Calu3 (cell line): ENCODE measurements at regions of chr2 and their contacts with region 1.

Region 1: DNA sequence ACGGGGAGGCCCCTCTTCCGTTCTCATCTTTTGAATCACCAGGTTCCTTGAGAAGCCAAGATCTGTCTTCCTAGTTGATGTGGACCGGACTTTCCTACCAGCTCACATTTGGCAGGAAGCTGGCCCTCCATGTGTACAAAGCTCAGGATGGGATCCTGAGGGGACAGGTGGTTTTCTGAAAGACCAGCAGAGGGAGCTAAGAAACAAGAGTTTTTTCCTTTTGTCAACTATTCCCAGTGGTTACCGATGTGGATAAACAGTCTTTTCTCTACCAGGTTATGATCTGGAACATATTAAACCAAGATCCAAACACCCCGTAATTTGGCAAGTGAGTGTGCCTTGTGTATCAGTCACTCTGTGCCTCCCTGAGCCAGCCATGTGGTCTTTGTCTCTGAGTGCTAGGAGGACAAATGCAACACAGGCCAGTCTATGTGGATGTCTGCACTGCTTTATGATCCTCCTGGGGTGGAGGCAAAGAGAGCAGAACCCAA is 25.1 kb upstream of the ARHGAP25 start:
- DNase-seq: peak; percentile 17
- H3K4me3 Mint-ChIP-seq: no peak overlapping the region
- H3K27ac Mint-ChIP-seq: no peak overlapping the region
- H3K4me1 Mint-ChIP-seq: peaks cover 5% of the 10 kb centered on the region
- H3K27me3 Mint-ChIP-seq: peaks cover 59% of the 10 kb centered on the region
- CTCF ChIP-seq: peak; percentile 48

Region 2: DNA sequence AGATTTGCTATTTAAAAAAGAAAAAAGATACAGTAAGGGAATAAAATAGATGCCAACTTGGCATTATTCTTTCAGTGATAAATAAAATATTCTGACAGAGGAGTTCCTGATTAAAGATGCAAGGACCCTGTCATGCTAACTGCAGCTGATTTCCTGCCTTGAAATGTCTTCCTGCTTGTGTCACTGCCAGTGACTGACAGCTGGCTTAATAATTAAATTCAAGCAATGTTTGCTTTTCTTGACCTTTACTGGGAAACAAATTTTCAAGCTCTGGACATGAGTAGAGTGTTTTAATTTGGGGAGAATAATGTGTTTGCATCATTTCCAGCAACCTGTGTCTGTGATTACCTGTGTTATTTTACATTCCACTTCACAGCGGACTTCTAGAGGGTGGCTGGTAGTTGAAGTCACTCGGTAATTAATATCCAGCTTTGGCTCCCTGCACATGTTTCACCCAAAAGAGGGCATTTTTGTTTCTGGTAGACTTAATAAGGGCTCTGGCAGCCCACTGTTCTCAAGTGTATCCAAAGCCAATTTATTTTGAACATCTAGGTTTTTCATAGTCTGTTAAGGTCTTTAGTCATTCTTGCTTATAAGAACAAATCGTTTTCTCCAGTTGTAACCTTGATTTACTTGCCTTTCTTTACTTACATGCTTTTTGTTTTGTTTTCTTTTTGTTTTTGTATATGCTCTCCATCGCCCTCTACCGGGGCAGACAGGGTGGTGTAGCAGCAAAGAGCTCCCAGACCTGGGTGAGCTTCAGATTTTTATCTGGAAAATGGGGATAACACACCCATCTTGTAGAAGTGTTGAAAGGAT is 114.6 kb before region 1 on chr2:
- CTCF ChIA-PET with region 1: no interaction called
- intact Hi-C with region 1: no loop called
- DNase-seq: peak; percentile 53
- H3K4me3 Mint-ChIP-seq: no peak overlapping the region
- H3K27ac Mint-ChIP-seq: no peak overlapping the region
- H3K4me1 Mint-ChIP-seq: peaks cover 14% of the 10 kb centered on the region
- H3K27me3 Mint-ChIP-seq: no peaks in the 10 kb centered on the region
- CTCF ChIP-seq: peak; percentile 70

Region 3: GRCh38 chr2:68901199-68901960 is 191.9 kb after region 1 on chr2:
- CTCF ChIA-PET with region 1: interaction called, 5 read pairs
- intact Hi-C with region 1: loop called (anchors 1 kb)
- DNase-seq: peak; percentile 31
- H3K4me3 Mint-ChIP-seq: no peak overlapping the region
- H3K27ac Mint-ChIP-seq: no peak overlapping the region
- H3K4me1 Mint-ChIP-seq: peaks cover under 1% of the 10 kb centered on the region
- H3K27me3 Mint-ChIP-seq: peaks cover 69% of the 10 kb centered on the region
- CTCF ChIP-seq: no peak

Region 4: DNA sequence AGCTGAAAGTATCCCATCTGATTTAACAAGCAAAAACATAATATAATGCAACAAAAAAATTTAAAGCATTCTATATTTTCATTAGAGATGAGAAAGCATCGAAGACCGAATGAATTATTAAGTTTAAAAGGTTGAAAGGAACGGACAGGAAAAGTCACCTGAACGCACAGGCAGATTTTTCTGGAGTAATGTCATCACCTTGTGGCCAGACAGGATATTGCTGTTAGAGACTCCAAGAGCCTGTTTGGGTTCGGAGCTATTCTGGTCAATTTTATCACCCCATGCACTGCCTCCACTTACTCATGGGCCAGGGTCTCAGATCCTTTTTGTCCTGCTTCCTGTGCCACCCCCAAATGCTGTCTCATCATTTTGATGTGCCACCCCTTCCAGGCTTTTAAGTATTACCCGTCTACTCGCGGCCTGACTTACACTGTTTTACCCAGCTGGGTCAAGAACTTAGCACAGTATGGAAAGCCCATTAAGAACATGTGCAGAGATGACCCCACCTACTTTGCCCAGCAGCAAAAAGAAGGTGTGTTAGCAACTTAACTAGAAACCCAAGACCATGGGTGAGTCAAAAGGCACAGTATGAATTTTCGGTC is 215.9 kb after region 1 on chr2:
- CTCF ChIA-PET with region 1: interaction called, 41 read pairs
- intact Hi-C with region 1: loop called (anchors 1 kb)
- DNase-seq: peak; percentile 55
- H3K4me3 Mint-ChIP-seq: no peak overlapping the region
- H3K27ac Mint-ChIP-seq: no peak overlapping the region
- H3K4me1 Mint-ChIP-seq: peaks cover 15% of the 10 kb centered on the region
- H3K27me3 Mint-ChIP-seq: peaks cover 41% of the 10 kb centered on the region
- CTCF ChIP-seq: peak; percentile 84